GM23248 (cell line): ENCODE measurements at regions of chr17 and their contacts with region 1.

Region 1: DNA sequence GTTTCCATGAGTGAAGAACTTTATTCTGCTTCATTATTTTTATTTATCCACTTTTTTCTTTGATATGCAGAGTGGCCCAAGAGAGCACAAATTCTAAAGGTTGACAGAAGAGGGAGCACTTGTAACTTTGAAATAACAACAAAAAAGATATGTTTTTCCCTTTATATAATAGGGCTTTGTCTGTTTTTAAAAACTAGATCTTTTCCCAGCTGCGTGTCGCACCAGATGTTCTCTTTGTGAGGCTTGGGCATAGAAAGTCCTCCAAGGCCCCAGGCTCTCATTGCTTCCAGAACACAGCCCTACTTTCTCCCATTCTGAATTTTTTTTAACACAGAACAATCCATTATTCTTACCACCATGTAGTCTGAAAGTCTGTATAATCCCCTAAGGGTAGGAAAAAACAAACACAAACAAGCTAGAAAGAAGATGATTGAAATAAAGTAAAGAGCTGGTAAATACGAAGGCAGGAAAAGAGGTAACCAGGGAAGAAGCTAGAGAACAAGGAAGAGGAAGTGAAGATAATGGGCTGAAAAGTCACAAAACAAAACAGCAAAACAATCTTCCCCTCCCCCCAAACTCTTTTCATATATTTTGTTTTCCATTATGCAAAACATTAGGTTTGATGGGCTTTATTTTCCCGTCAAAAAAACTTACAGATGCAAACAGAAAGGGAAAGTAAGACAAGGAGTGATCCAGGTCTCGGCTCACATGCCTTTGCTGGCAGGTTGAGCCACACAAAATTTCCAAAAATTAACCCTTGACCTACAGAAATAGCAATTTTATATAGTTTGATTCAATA is 160.4 kb downstream of the ABCA8 start:
- DNase-seq: peak; percentile 71
- H3K4me3 ChIP-seq: peak overlapping the region; percentile 39
- H3K27ac ChIP-seq: peak overlapping the region; percentile 67
- H3K4me1 ChIP-seq: peaks cover 51% of the 10 kb centered on the region
- H3K27me3 ChIP-seq: no peaks in the 10 kb centered on the region

Region 2: DNA sequence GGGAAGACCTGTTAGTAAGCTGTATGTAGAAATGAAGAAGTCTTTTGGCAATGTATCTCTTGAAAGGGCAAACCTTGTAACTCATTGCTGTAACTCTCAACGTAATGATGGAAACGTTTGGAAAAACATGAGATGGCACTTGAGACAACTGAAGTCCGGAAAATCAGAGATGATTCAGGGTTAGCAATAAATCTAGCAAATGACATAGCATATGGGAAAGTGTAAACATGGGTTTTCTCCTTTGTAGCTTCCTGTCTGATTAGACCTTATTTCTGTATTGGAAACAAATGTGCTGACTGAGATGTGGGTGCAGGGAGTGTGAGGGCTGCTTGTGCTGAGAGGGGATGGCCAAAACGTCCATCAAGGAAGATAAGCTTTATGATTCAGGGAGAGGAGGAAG is 83.0 kb before region 1 on chr17:
- in situ Hi-C with region 1: no loop called
- DNase-seq: peak; percentile 26
- H3K4me3 ChIP-seq: no peak overlapping the region
- H3K27ac ChIP-seq: no peak overlapping the region
- H3K4me1 ChIP-seq: peaks cover 37% of the 10 kb centered on the region
- H3K27me3 ChIP-seq: no peaks in the 10 kb centered on the region

Region 3: GRCh38 chr17:68849673-68850610 is 55.1 kb after region 1 on chr17:
- in situ Hi-C with region 1: no loop called
- DNase-seq: peak; percentile 10
- H3K4me3 ChIP-seq: no peak overlapping the region
- H3K27ac ChIP-seq: no peak overlapping the region
- H3K4me1 ChIP-seq: no peaks in the 10 kb centered on the region
- H3K27me3 ChIP-seq: peaks cover 5% of the 10 kb centered on the region; the same call in 1 of the 2 replicates

Region 4: GRCh38 chr17:69058165-69058564 is 263.3 kb after region 1 on chr17:
- in situ Hi-C with region 1: loop called (anchors 10 kb)
- DNase-seq: peak; percentile 7
- H3K4me3 ChIP-seq: no peak overlapping the region
- H3K27ac ChIP-seq: no peak overlapping the region
- H3K4me1 ChIP-seq: peaks cover 27% of the 10 kb centered on the region
- H3K27me3 ChIP-seq: no peaks in the 10 kb centered on the region